Psoas muscle (tissue), 8 donors: ENCODE measurements at regions of chr11 and their contacts with region 1.

Region 1: DNA sequence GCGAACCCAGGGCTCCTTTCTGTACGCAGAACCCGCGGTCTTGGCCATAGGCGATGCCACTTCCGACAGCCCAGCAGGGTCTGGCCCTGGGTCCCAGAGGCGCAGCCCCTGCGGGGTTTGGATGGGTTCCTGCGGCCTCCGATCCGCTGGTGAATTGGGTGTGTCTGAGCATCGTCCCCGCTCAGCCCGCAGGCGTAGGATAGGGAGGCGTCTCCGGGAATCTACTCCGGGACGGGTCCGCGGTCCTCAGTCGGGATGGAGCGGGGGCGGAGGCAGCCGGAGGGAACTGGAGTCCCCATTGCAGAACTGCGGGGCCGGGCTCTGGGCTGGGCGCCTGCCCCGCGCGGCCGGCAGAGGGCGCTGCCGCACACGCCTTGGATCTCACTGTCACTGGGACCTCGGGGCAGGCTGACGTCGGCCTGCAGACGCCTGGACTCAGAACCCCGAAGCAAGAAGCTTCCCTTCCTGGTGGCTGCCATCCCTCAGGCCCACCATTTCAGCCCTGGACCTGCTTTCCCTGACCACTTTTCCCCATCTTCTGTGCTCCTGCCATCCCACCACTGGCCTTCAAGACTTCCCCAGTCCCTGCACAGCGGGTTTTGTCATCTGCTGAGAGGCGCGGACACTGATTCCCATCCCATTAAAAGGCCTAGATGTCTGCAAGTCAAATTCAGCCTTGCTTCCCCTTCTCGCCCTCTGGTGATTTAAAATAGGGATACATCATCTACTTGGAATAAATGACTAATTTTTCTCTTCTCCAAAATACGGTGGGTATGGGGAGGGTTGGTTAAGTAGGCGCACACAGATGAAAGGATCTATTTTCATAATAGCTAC is 38.3 kb upstream of the CREB3L1 start:
- DNase-seq: peak; percentile 86 to 92
- ATAC-seq: peak; percentile 80 to 90 (median 85)
- H3K4me3 ChIP-seq: peak overlapping the region; percentile 64
- H3K27ac ChIP-seq: peak overlapping the region; percentile 20
- H3K4me1 ChIP-seq: peaks cover 17% of the 10 kb centered on the region
- H3K27me3 ChIP-seq: peaks cover 0 to 19% (median 2%) of the 10 kb centered on the region in 3 donors
- CTCF ChIP-seq: peak; percentile 99

Region 2: GRCh38 chr11:46308631-46309419 is 69.6 kb after region 1 on chr11:
- intact Hi-C with region 1: loop called (anchors 1 to 2 kb)
- DNase-seq: peak; percentile 82 to 88
- ATAC-seq: peak; percentile 85 to 96 (median 90)
- H3K4me3 ChIP-seq: no peak overlapping the region
- H3K27ac ChIP-seq: no peak overlapping the region
- H3K4me1 ChIP-seq: no peaks in the 10 kb centered on the region
- H3K27me3 ChIP-seq: no peaks in the 10 kb centered on the region
- CTCF ChIP-seq: peak; percentile 89

Region 3: GRCh38 chr11:46367244-46367915 is 128.2 kb after region 1 on chr11:
- intact Hi-C with region 1: no loop called
- DNase-seq: peak; percentile 78 to 86
- ATAC-seq: peak; percentile 35 to 52 (median 46)
- H3K4me3 ChIP-seq: no peak overlapping the region
- H3K27ac ChIP-seq: peak overlapping the region; percentile 58
- H3K4me1 ChIP-seq: peaks cover 44% of the 10 kb centered on the region
- H3K27me3 ChIP-seq: no peaks in the 10 kb centered on the region
- CTCF ChIP-seq: peak; percentile 91

Region 4: GRCh38 chr11:46611526-46612304 is 372.5 kb after region 1 on chr11:
- intact Hi-C with region 1: loop called in 1 of 2 experiments (anchors 5 kb)
- DNase-seq: no peak
- ATAC-seq: peak in 1 of 4 donors; percentile 23
- H3K4me3 ChIP-seq: no peak overlapping the region
- H3K27ac ChIP-seq: no peak overlapping the region
- H3K4me1 ChIP-seq: peaks cover 12% of the 10 kb centered on the region
- H3K27me3 ChIP-seq: no peaks in the 10 kb centered on the region
- CTCF ChIP-seq: no peak